HEK293 (cell line): ENCODE measurements at regions of chrX and their contacts with region 1.

Region 1: DNA sequence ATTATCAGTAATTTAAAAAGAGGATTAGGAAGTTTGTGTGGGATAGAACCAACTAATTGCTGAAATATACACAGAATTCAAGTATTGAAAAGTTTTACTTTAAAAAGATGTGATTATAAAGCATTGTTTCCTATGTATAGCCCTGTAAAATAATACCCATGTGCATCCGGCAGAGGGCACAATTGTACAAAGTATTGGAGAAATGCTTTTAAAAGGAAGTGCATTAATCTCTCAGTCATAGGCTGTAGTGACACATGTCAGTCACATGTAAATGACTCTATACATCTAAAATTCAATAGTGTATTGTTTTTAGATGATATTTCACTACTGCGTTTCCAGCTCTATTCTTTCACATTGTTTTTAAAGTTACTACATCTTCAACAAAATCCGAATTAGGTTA is 9.7 kb upstream of the GEMIN8 start:
- H3K4me3 ChIP-seq: no peak overlapping the region
- H3K27ac ChIP-seq: no peak overlapping the region
- H3K4me1 ChIP-seq: no peaks in the 10 kb centered on the region
- CTCF ChIP-seq: no peak

Region 2: DNA sequence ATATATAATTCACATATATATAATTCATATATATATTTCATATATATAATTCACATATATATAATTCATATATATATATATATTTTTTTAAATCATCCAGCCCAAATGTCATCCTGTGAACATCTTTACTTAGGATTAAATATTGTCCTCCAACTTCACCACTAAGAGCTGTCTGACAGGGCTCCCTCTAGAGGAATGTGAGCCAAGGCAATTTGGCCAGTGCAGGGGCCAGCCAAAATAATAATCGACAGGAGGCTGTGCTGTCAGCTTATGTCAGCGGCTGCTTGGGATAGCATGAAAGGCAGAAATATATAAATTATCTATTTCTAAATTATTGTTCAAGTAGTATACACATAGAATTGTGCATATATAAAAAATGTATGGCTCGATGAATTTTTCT is 440.5 kb before region 1 on chrX:
- CTCF ChIA-PET with region 1: no interaction called
- POLR2A ChIA-PET with region 1: no interaction called
- H3K4me3 ChIP-seq: no peak overlapping the region
- H3K27ac ChIP-seq: no peak overlapping the region
- H3K4me1 ChIP-seq: no peaks in the 10 kb centered on the region
- CTCF ChIP-seq: no peak

Region 3: GRCh38 chrX:14497184-14497666 is 457.9 kb after region 1 on chrX:
- CTCF ChIA-PET with region 1: no interaction called
- POLR2A ChIA-PET with region 1: no interaction called
- H3K4me3 ChIP-seq: no peak overlapping the region
- H3K27ac ChIP-seq: no peak overlapping the region
- H3K4me1 ChIP-seq: no peaks in the 10 kb centered on the region
- CTCF ChIP-seq: no peak

Region 4: DNA sequence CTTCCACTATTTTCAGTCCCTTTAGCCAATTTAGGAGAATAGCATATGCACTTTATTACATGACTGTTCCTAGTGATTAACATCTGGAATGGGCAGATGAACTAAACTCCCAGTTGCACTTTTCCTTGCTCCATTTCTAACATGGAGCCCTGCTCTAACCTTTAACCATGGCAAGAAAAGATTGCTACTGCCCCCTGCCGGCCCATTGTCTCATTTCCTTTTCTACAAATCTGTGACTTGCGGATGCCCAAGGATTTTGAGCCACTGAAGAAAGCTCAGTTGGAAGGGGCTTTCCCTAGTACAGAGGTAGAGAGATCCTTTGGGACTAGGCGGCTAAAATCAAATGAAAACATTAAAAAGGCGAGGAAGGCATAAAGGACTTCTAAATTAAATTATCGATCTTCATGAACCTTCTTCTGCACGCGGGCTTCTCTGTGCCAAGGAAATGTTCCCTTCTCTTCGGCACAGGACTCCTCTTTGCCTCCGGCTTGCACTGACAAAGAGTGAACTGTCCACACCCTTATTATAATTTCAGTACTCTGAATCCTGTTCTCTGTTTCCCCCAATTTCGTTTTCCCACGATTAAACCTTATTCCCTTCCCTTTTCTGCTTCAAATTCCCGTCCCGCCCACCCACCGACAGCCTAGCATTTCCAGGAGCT is 489.4 kb after region 1 on chrX:
- CTCF ChIA-PET with region 1: interaction called, 20 read pairs
- POLR2A ChIA-PET with region 1: no interaction called
- H3K4me3 ChIP-seq: no peak overlapping the region
- H3K27ac ChIP-seq: no peak overlapping the region
- H3K4me1 ChIP-seq: no peaks in the 10 kb centered on the region
- CTCF ChIP-seq: no peak